ENCODE measurements at regions of chr1 and their contacts with region 1.

Region 1: GRCh38 chr1:26811057-26811456 is 15.4 kb upstream of the ZDHHC18 start:
- DNase-seq: no peak
- H3K4me3 Mint-ChIP-seq: no peak overlapping the region
- H3K27ac Mint-ChIP-seq: no peak overlapping the region
- H3K4me1 Mint-ChIP-seq: peaks cover 20% of the 10 kb centered on the region
- H3K27me3 Mint-ChIP-seq: no peaks in the 10 kb centered on the region

Region 2: DNA sequence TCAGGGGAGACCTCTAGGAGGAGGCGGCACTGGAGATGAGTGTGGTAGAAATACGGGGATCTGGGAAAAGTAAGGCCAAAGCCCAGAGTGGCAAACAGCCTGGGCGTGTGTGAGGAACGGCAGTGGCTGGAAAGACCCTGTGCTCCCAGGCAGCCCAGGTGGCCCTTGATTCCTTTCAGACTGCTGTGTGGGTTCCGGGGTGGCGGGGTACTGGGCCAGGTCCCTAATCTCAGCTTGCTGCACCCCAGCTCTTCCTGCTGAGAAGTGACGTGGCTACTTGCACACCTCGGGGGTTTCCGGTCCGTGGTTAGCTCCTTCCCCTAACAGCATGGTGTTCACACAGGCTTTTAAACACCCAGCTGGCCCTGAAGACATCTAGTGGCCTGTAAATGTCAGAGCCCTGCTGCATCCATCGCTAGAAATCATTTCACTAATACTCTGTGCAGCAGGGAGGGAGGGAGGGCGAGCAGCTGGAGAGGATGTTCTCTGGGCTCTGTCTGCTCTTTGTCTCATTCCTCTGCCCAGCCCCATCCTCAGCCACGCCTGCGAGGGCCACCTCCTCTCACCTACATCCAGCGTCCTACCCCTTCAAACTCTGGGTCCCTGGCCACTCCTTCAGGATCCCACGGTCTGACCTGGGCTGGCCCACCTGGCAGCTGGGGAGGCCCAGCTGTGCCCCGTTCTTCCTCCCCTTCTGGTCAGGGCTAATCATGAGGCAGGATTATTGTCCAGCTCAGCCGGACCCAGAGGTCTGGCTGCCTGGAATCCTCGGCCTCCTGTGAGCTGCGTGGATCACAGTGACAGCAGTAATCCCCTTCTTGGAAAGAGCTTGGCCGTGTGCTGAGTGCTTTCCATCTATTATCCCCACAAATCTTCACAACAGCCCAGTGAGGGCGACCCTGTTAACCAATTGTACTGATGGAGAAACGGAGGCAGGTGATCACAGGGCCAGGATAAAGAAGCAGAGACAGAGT is 22.7 kb after region 1 on chr1:
- CTCF ChIA-PET with region 1: interaction called, 29 read pairs
- POLR2A ChIA-PET with region 1: no interaction called
- DNase-seq: peak; percentile 95
- H3K4me3 Mint-ChIP-seq: peak overlapping the region; percentile 64
- H3K27ac Mint-ChIP-seq: peak overlapping the region; percentile 99
- H3K4me1 Mint-ChIP-seq: peaks cover 75% of the 10 kb centered on the region
- H3K27me3 Mint-ChIP-seq: no peaks in the 10 kb centered on the region